ENCODE measurements at regions of chr2 and their contacts with region 1.

Region 1: GRCh38 chr2:231925303-231926179 is 655 bp downstream of the NPPC start:
- DNase-seq: peak; percentile 92
- ATAC-seq: peak; percentile 89

Region 2: GRCh38 chr2:232008907-232009638 is 83.5 kb after region 1 on chr2:
- intact Hi-C with region 1: no loop called
- DNase-seq: no peak
- ATAC-seq: no peak

Region 3: DNA sequence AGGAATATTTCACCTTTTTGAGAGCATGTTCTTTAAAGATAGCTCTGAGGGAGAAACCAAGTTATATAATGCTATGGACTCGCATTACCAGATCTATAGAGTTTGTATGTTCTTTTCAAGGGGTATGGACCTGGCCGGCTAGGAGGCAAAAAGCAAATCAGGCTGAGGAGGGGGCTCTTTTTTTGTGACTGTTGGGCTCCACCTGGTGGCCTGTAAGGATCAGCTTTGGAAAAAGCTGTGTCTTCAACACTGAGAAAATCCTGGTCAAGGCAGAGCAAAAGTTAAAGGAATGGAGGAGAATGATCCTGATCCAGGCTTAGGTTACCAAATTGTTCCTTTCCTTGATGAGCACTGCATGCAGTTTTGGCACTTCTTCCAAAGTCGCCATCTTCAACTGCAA is 216.5 kb after region 1 on chr2:
- intact Hi-C with region 1: loop called (anchors 5 kb)
- DNase-seq: no peak
- ATAC-seq: peak; percentile 80